ENCODE measurements at regions of chr5 and their contacts with region 1.

Region 1: DNA sequence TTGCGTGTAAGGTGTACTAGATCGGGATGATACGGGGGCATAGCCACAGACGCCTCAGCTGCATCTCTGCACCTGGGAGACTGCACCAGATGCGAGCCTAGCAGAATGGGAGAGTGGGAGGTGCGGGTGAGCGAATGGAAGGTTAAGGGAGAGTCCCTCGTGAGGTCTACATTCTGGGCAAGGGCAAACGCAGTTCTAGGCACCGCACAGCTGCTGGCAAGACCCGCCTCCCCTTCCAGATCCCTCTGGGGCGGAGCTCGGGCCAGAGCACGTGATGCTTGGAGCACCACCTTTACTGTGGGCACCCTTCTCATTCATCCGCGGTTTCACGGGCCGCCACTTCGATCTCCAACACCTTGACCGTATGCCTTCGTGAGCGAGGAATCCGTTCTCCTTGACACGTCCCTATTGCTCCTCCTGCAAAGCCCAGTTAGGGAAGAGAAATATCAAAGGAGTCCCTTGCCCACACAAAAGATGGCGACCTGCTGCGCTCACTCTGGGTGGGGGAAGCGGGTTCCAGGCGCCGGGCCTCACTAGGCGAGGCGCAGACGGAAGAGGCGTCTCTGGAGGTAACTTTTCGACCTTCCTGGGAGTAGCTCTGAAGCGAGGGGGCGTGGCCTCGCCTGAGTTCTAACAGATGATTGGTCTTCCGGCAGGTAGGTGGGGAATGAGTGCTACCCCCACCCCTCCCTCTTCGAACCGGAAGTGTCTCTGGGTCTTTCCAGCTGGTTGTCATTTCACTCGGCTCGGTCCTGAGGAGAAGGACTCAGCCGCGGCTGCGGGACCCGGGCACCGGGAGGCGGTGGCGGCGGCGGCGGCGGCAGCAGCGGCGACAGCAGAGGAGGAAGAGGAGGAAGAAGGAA is at the start of gene CPEB4:
- DNase-seq: peak; percentile 100
- H3K4me3 Mint-ChIP-seq: peak within 1 kb of the TSS; percentile 97
- H3K27ac Mint-ChIP-seq: peak within 1 kb of the TSS; percentile 99
- H3K4me1 Mint-ChIP-seq: peaks cover 49% of the 10 kb centered on the region
- H3K27me3 Mint-ChIP-seq: no peaks in the 10 kb centered on the region
- CTCF ChIP-seq: no peak
- total RNA-seq, gene CPEB4: 86.7 and 99.0 TPM in 2 replicates

Region 2: GRCh38 chr5:173764321-173765029 is 123.4 kb before region 1 on chr5:
- CTCF ChIA-PET with region 1: interaction called, 4 read pairs
- POLR2A ChIA-PET with region 1: interaction called, 176 read pairs
- intact Hi-C with region 1: loop called (anchors 1 kb)
- DNase-seq: peak; percentile 99
- H3K4me3 Mint-ChIP-seq: peak overlapping the region; percentile 22
- H3K27ac Mint-ChIP-seq: peak overlapping the region; percentile 77
- H3K4me1 Mint-ChIP-seq: peaks cover 40% of the 10 kb centered on the region
- H3K27me3 Mint-ChIP-seq: no peaks in the 10 kb centered on the region
- CTCF ChIP-seq: no peak

Region 3: GRCh38 chr5:173802670-173803165 is 85.1 kb before region 1 on chr5:
- CTCF ChIA-PET with region 1: interaction called, 4 read pairs
- POLR2A ChIA-PET with region 1: interaction called, 10 read pairs
- intact Hi-C with region 1: no loop called
- DNase-seq: peak; percentile 99
- H3K4me3 Mint-ChIP-seq: no peak overlapping the region
- H3K27ac Mint-ChIP-seq: peak overlapping the region; percentile 80
- H3K4me1 Mint-ChIP-seq: peaks cover 44% of the 10 kb centered on the region
- H3K27me3 Mint-ChIP-seq: no peaks in the 10 kb centered on the region
- CTCF ChIP-seq: no peak

Region 4: GRCh38 chr5:173872957-173873305 is 14.9 kb before region 1 on chr5:
- CTCF ChIA-PET with region 1: no interaction called
- POLR2A ChIA-PET with region 1: interaction called, 16 read pairs
- intact Hi-C with region 1: no loop called
- DNase-seq: no peak
- H3K4me3 Mint-ChIP-seq: no peak overlapping the region
- H3K27ac Mint-ChIP-seq: no peak overlapping the region
- H3K4me1 Mint-ChIP-seq: peaks cover 8% of the 10 kb centered on the region
- H3K27me3 Mint-ChIP-seq: no peaks in the 10 kb centered on the region
- CTCF ChIP-seq: no peak

Region 5: DNA sequence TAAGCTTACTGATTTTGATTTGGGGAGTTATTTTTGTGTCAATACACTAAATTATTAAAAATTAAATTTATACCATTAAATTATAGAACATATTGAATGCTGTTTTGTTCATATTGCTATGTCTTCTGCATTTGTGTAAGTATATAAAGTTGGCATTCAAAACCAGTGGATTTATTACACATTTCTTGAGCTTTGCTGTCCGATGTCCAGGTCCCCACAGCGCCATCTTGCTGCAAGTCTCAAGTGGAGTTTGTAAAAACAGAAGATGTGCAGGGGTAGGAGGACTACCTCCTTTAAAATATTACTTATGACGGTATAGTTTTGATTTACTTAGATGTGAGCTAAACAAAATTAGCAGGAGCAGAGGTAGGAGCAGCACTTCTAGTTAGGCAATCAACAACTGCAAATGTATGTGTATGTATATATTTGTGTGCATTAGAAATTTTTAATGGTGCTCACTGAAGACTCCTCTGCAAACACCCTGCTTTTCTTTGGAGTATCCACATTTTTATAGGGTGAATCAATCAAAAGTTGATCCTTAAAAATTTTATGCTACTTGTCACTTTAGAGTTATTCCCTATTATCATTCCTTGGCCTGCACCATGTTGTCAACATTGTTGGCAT is 37.7 kb after region 1 on chr5:
- CTCF ChIA-PET with region 1: interaction called, 9 read pairs
- POLR2A ChIA-PET with region 1: interaction called, 149 read pairs
- intact Hi-C with region 1: loop called (anchors 5 kb)
- DNase-seq: peak; percentile 77
- H3K4me3 Mint-ChIP-seq: no peak overlapping the region
- H3K27ac Mint-ChIP-seq: no peak overlapping the region
- H3K4me1 Mint-ChIP-seq: peaks cover 47% of the 10 kb centered on the region
- H3K27me3 Mint-ChIP-seq: no peaks in the 10 kb centered on the region
- CTCF ChIP-seq: peak; percentile 66

Measured in MCF 10A (cell line).